Heart right ventricle (tissue), 16 donors: ENCODE measurements at regions of chr11 and their contacts with region 1.

Region 1: DNA sequence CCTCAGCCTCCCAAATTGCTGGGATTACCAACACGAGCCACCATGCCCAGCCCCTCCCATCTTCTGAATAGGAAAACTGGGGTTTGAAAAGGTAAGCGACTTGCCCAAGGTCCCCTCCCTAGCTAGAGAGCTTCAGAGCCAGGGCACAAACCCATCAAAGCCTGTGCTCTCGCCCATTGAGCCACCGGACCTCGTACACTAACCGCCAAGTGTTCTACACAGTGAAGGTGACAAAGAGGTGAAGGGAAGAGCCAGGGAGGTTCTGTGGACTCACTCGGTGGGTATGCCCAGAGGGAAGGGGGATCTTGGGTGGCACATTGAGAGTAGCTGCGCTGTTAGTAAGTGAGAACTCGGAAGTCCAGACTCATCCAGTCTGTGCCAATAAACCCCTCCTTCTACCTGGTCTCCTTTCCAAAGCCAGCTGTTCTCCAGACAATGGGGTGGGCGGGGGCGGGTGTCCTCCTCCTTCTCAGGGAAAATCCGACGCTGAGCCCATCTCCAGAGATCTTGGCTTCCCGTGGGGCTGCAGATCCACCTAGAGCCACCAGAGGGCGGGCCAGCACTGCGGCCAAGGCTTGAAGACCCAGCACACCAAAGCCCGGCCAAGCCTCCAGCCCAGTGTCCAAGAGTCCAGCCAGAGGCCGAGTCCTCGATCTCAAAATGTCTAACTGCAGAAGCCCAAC is 3.2 kb upstream of the RTN4RL2 start:
- DNase-seq: peak; percentile 89 to 90
- ATAC-seq: peak; percentile 85 to 92 (median 87)
- H3K4me3 ChIP-seq: peak overlapping the region in 1 of 10 donors; percentile 16
- H3K27ac ChIP-seq: no peak overlapping the region
- H3K4me1 ChIP-seq: peaks cover 4 to 42% (median 35%) of the 10 kb centered on the region in 9 donors
- H3K27me3 ChIP-seq: peaks cover 13 to 52% (median 44%) of the 10 kb centered on the region in 7 donors
- CTCF ChIP-seq: peak; percentile 99

Region 2: GRCh38 chr11:57387289-57388030 is 69.6 kb before region 1 on chr11:
- intact Hi-C with region 1: loop called in 1 of 10 experiments (anchors 2 kb)
- DNase-seq: peak; percentile 42 to 47
- ATAC-seq: peak in 7 of 8 donors; percentile 26 to 85 (median 62)
- H3K4me3 ChIP-seq: no peak overlapping the region
- H3K27ac ChIP-seq: peak overlapping the region in 2 of 10 donors; percentile 43 to 55
- H3K4me1 ChIP-seq: peaks cover 0 to 16% (median 0%) of the 10 kb centered on the region in 9 donors
- H3K27me3 ChIP-seq: no peaks in the 10 kb centered on the region
- CTCF ChIP-seq: peak in 7 of 9 donors; percentile 9 to 51 (median 40)

Region 3: GRCh38 chr11:57480409-57481137 is 23.5 kb after region 1 on chr11:
- intact Hi-C with region 1: loop called in 2 of 10 experiments (anchors 2 kb)
- DNase-seq: peak; percentile 67 to 71
- ATAC-seq: peak in 5 of 8 donors; percentile 30 to 64 (median 43)
- H3K4me3 ChIP-seq: no peak overlapping the region
- H3K27ac ChIP-seq: no peak overlapping the region
- H3K4me1 ChIP-seq: peaks cover 11 to 42% (median 31%) of the 10 kb centered on the region in 9 donors
- H3K27me3 ChIP-seq: peaks cover 0 to 46% (median 24%) of the 10 kb centered on the region in 7 donors
- CTCF ChIP-seq: peak; percentile 49 to 81 (median 73)

Region 4: DNA sequence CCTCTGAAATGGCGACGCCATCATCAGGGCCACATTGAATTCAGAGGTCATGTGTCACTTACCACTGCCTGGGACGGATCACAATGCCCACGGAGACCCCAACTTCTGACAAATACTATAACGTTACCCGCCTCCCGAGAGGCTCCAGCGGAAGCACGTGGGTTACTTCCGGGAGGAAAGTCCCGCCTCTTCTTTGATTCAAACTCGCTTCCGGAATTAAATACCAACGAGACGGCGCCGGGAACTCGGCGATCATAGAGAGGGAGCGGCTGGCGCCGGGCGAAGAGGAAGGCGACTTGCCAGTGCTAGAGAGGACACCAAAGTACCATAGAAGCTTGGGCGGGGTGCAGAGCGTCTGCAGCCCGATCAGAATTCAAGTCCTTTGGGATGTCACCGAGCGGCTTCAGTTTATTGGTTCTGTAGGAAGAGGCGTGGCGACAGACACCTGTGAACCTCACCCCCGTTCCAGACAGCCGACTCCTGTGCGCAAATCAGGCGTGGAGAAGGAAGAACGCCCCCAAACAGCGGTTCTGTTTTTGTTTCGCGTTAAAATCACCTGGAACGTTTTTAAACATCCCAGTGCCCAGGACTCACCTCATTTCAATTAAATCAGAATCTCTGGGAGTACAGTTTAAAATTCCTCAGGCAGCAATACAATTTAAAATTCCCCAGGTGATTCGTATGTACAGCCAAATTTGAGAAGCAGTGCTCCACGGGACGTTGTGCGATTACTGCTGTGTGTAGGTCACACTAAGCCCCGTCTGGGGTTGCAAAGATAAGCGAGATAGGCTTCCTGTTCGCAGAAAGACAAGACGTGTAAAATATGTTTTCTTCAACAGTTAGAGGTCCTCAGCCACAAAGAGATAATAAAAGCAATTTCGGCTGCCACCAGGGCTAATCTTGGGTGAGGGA is 73.8 kb after region 1 on chr11 and contains the start of gene TIMM10:
- intact Hi-C with region 1: loop called in 9 of 10 experiments (anchors 1 to 5 kb)
- DNase-seq: peak; percentile 93 to 95
- ATAC-seq: peak; percentile 97 to 99 (median 98)
- H3K4me3 ChIP-seq: peak within 1 kb of the TSS; percentile 51 to 90 (median 74)
- H3K27ac ChIP-seq: peak within 1 kb of the TSS in 9 of 10 donors; percentile 30 to 86 (median 76)
- H3K4me1 ChIP-seq: peaks cover 0 to 23% (median 13%) of the 10 kb centered on the region in 9 donors
- H3K27me3 ChIP-seq: no peaks in the 10 kb centered on the region
- CTCF ChIP-seq: no peak
- total RNA-seq, gene TIMM10: 38.0 to 76.6 (median 51.5) TPM